CD8-positive, alpha-beta memory T cell (primary cell): ENCODE measurements at regions of chr22 and their contacts with region 1.

Region 1: GRCh38 chr22:39319270-39320022 is at the start of gene RPL3:
- DNase-seq: peak; percentile 93 to 98 (median 97)
- H3K4me3 ChIP-seq: peak within 1 kb of the TSS; percentile 99
- H3K4me3 Mint-ChIP-seq: peak within 1 kb of the TSS; percentile 95 to 100 (median 99)
- H3K27ac ChIP-seq: peak within 1 kb of the TSS; percentile 93
- H3K27ac Mint-ChIP-seq: peak within 1 kb of the TSS; percentile 90 to 99 (median 97)
- H3K4me1 ChIP-seq: peaks cover 42% of the 10 kb centered on the region
- H3K4me1 Mint-ChIP-seq: peaks cover 47 to 57% (median 52%) of the 10 kb centered on the region in 3 donors
- H3K27me3 ChIP-seq: no peaks in the 10 kb centered on the region
- H3K27me3 Mint-ChIP-seq: peaks cover 0 to 10% of the 10 kb centered on the region in 2 donors
- total RNA-seq, gene RPL3: 2,574 to 2,607 TPM

Region 2: DNA sequence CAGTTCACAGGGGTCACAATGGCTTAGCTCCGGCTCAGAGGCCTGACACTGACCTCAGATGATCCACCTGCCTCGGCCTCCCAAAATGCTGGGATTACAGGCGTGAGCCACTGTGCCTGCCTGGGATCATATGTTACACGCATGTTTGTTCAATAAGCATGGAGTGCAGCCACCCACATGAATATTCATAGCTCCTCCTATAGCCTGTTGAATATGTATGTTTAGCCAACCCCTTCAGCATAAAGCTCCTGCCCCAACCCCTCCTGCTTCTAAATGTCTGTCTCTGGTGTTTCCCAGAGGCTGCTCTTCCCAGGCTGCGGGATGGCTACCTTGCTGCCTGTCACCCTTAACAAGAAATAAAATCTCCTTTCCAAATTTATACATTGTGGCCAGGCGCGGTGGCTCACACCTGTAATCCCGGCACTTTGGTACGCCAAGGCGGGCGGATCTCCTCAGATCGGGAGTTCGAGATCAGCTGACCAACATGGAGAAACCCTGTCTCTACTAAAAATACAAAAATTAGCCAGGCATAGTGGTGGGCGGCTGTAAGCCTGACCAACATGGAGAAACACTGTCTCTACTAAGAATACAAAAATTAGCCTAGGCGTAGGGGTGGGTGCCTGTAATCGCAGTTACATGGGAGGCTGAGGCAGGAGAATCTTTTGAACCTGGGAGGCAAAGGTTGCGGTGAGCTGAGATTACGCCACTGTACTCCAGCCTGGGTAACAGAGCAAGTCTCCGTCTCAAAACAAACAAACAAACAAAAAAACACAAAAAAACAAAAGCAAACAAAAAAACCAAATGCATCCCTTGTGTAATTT is 279.9 kb before region 1 on chr22:
- CTCF ChIA-PET with region 1: no interaction called
- POLR2A ChIA-PET with region 1: no interaction called
- DNase-seq: no peak
- H3K4me3 ChIP-seq: no peak overlapping the region
- H3K4me3 Mint-ChIP-seq: peak overlapping the region; percentile 50 to 93 (median 88)
- H3K27ac ChIP-seq: peak overlapping the region; percentile 43
- H3K27ac Mint-ChIP-seq: peak overlapping the region; percentile 77 to 96 (median 94)
- H3K4me1 ChIP-seq: peaks cover 16% of the 10 kb centered on the region
- H3K4me1 Mint-ChIP-seq: peaks cover 28 to 42% (median 36%) of the 10 kb centered on the region in 3 donors
- H3K27me3 ChIP-seq: no peaks in the 10 kb centered on the region
- H3K27me3 Mint-ChIP-seq: no peaks in the 10 kb centered on the region

Region 3: GRCh38 chr22:39144101-39144767 is 175.2 kb before region 1 on chr22:
- CTCF ChIA-PET with region 1: interaction called, 6 read pairs
- POLR2A ChIA-PET with region 1: interaction called, 22 read pairs
- DNase-seq: peak; percentile 50 to 77 (median 69)
- H3K4me3 ChIP-seq: peak overlapping the region; percentile 96
- H3K4me3 Mint-ChIP-seq: peak overlapping the region; percentile 91 to 98 (median 96)
- H3K27ac ChIP-seq: peak overlapping the region; percentile 77
- H3K27ac Mint-ChIP-seq: peak overlapping the region; percentile 93 to 99 (median 96)
- H3K4me1 ChIP-seq: peaks cover 45% of the 10 kb centered on the region
- H3K4me1 Mint-ChIP-seq: peaks cover 34 to 54% (median 39%) of the 10 kb centered on the region in 3 donors
- H3K27me3 ChIP-seq: no peaks in the 10 kb centered on the region
- H3K27me3 Mint-ChIP-seq: no peaks in the 10 kb centered on the region

Region 4: GRCh38 chr22:39205338-39206021 is 114.0 kb before region 1 on chr22:
- CTCF ChIA-PET with region 1: interaction called, 8 read pairs
- POLR2A ChIA-PET with region 1: interaction called, 15 read pairs
- DNase-seq: peak in 4 of 5 donors; percentile 21 to 88 (median 74)
- H3K4me3 ChIP-seq: no peak overlapping the region
- H3K4me3 Mint-ChIP-seq: peak overlapping the region; percentile 44 to 86 (median 71)
- H3K27ac ChIP-seq: no peak overlapping the region
- H3K27ac Mint-ChIP-seq: peak overlapping the region; percentile 84 to 97 (median 90)
- H3K4me1 ChIP-seq: no peaks in the 10 kb centered on the region
- H3K4me1 Mint-ChIP-seq: peaks cover 36 to 50% (median 41%) of the 10 kb centered on the region in 3 donors
- H3K27me3 ChIP-seq: no peaks in the 10 kb centered on the region
- H3K27me3 Mint-ChIP-seq: peaks cover 0 to 7% of the 10 kb centered on the region in 2 donors

Region 5: DNA sequence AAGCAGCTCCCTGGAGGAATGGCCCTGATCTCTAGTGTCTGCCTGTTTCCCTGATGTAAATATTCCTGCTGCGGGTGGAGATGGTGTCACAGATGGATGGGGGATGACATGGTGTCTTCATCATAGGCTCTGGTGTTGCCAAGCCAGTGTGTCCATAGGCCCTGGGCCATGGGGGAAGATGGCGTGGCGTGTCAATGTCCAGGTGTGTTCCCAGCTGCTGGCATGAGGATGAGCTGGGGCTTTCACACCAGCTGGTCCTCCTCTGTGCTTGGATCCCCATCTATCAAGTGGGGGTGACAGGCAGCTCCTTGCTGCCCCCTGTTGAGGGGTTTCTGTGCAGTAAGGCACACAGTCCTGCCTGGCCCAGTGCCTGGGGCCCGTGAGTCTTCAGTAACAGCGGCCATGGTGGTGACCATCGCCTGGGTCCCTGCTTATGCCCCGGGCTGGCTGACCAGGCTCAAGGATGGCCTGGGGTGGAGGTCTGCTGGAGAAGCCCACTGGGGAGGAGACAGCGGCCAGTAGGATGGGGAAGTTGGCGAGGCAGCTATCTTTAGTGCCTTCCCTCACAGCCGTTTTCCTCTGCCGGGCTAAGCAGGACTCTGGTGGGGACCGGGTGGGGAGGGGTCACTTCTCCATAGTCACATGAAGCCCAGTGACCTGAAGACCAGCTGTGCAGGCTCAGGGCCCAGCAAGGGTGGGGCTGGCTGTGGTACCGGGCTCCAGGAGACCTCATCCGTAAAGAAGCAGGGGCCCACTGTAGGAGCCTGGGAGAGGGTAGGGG is 12.7 kb before region 1 on chr22:
- CTCF ChIA-PET with region 1: interaction called, 17 read pairs
- POLR2A ChIA-PET with region 1: interaction called, 5 read pairs
- DNase-seq: peak; percentile 27 to 67 (median 32)
- H3K4me3 ChIP-seq: no peak overlapping the region
- H3K4me3 Mint-ChIP-seq: no peak overlapping the region
- H3K27ac ChIP-seq: no peak overlapping the region
- H3K27ac Mint-ChIP-seq: peak overlapping the region in 2 of 8 donors; percentile 4 to 65
- H3K4me1 ChIP-seq: no peaks in the 10 kb centered on the region
- H3K4me1 Mint-ChIP-seq: peaks cover 14 to 32% (median 16%) of the 10 kb centered on the region in 3 donors
- H3K27me3 ChIP-seq: no peaks in the 10 kb centered on the region
- H3K27me3 Mint-ChIP-seq: peaks cover 0 to 2% of the 10 kb centered on the region in 2 donors

Region 6: DNA sequence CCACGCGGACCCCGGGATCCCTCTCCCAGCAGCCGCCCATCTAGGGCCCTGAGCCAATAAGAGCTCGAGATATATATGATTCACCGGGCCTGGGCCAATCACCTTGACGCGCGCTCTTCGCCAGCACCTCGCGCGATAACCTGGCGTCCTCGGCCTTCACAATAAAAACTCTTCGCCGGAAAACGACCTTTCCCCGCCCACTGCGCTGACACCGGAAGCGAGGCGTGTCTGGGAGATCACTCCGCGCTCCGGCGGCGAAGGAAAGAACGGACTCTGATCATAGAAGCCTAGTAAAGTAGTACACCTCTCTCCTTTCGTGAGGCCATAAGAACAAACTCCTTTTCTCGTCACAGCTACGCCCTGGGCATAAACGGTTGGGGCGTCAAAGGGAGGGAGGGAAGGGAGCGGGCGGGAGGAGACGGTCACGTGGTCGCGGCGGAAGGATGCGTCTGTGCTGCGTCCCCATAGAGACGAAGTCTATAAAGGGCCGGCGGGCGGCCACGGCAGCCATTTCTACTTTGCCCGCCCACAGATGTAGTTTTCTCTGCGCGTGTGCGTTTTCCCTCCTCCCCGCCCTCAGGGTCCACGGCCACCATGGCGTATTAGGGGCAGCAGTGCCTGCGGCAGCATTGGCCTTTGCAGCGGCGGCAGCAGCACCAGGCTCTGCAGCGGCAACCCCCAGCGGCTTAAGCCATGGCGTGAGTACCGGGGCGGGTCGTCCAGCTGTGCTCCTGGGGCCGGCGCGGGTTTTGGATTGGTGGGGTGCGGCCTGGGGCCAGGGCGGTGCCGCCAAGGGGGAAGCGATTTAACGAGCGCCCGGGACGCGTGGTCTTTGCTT is 200.8 kb after region 1 on chr22 and contains the start of gene ATF4:
- CTCF ChIA-PET with region 1: interaction called, 4 read pairs
- POLR2A ChIA-PET with region 1: interaction called, 19 read pairs
- DNase-seq: peak; percentile 94 to 99 (median 96)
- H3K4me3 ChIP-seq: peak within 1 kb of the TSS; percentile 90
- H3K4me3 Mint-ChIP-seq: peak within 1 kb of the TSS; percentile 89 to 99 (median 96)
- H3K27ac ChIP-seq: peak within 1 kb of the TSS; percentile 80
- H3K27ac Mint-ChIP-seq: peak within 1 kb of the TSS; percentile 95 to 100 (median 98)
- H3K4me1 ChIP-seq: peaks cover 39% of the 10 kb centered on the region
- H3K4me1 Mint-ChIP-seq: peaks cover 47 to 56% (median 51%) of the 10 kb centered on the region in 3 donors
- H3K27me3 ChIP-seq: no peaks in the 10 kb centered on the region
- H3K27me3 Mint-ChIP-seq: peaks cover 0 to 14% of the 10 kb centered on the region in 2 donors
- total RNA-seq, gene ATF4: 757 to 758 TPM